ENCODE measurements at regions of chr3 and their contacts with region 1.

Region 1: DNA sequence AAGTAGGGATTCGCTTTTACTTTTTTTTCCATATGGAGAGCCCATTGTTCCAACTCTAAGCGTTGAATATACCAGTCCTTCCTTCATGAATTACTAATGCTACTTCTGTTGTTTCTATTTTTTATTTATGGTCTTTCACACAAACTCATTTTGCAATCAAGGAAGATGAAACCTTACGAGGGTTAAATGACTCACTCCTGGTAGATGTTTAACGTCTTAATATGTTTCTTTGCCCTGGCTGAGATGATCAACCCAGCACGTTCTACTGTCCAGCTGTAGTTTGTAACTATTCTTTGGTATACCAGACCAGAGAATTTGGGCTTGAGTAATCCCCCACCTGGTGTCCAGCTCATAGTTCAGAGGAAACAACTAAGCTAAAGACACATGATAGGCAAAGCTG is 23.1 kb downstream of the CDCP1 start:
- DNase-seq: peak; percentile 91
- H3K4me3 Mint-ChIP-seq: peak overlapping the region; percentile 19
- H3K27ac Mint-ChIP-seq: peak overlapping the region; percentile 80
- H3K4me1 Mint-ChIP-seq: peaks cover 64% of the 10 kb centered on the region
- H3K27me3 Mint-ChIP-seq: no peaks in the 10 kb centered on the region
- CTCF ChIP-seq: no peak

Region 2: GRCh38 chr3:44883999-44884431 is 239.0 kb before region 1 on chr3:
- CTCF ChIA-PET with region 1: no interaction called
- POLR2A ChIA-PET with region 1: no interaction called
- intact Hi-C with region 1: loop called (anchors 5 kb)
- DNase-seq: peak; percentile 96
- H3K4me3 Mint-ChIP-seq: peak overlapping the region; percentile 30
- H3K27ac Mint-ChIP-seq: peak overlapping the region; percentile 98
- H3K4me1 Mint-ChIP-seq: peaks cover 47% of the 10 kb centered on the region
- H3K27me3 Mint-ChIP-seq: no peaks in the 10 kb centered on the region
- CTCF ChIP-seq: no peak

Region 3: DNA sequence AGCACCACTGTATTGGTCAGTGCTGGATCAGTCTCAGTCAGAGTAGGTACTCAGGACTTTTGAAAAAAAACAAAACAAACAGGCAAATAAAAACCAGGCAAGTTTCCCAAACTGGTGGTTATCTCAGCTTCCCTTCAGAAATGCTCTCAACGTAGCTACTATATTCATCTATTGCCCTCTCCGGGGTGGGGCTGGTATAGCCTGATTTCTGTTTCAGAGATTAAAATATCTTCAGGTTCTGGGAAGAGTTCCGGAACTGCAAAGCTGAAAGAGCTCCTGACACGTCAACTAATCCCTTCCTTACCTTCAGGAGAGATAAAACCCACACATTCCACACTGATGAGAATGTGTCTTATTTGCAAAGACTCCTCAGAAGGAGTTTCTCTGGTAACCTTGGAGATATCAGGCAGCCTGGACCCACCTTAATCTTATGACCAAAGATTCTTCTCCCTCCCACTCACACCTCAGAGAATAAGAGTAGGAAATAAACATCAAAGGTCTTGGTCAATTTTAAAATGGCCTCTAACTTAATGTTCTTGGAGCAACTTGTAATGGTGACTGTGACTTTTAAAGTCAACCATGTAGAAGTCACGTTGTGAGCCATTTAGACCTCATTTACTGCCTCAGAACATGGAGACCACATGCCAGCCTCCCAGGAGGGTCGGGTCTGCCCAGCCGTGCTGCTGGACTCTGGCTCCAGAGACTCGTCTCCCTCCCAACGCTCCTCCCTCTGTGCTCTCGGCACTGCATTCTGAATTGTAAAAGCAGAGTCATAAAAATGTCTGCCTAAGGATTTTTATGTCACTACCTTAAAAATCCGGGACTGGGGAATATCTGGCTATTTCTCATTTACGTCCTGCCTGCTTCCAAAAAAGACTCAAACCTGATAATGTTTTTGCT is 30.6 kb before region 1 on chr3:
- CTCF ChIA-PET with region 1: interaction called, 3 read pairs
- POLR2A ChIA-PET with region 1: interaction called, 7 read pairs
- intact Hi-C with region 1: loop called (anchors 1 kb)
- DNase-seq: peak; percentile 71
- H3K4me3 Mint-ChIP-seq: no peak overlapping the region
- H3K27ac Mint-ChIP-seq: peak overlapping the region; percentile 87
- H3K4me1 Mint-ChIP-seq: peaks cover 18% of the 10 kb centered on the region
- H3K27me3 Mint-ChIP-seq: no peaks in the 10 kb centered on the region
- CTCF ChIP-seq: no peak

Region 4: GRCh38 chr3:45134758-45135521 is 11.9 kb after region 1 on chr3:
- CTCF ChIA-PET with region 1: interaction called, 12 read pairs
- POLR2A ChIA-PET with region 1: interaction called, 44 read pairs
- intact Hi-C with region 1: no loop called
- DNase-seq: no peak
- H3K4me3 Mint-ChIP-seq: no peak overlapping the region
- H3K27ac Mint-ChIP-seq: peak overlapping the region; percentile 96
- H3K4me1 Mint-ChIP-seq: peaks cover 67% of the 10 kb centered on the region
- H3K27me3 Mint-ChIP-seq: no peaks in the 10 kb centered on the region
- CTCF ChIP-seq: no peak

Region 5: DNA sequence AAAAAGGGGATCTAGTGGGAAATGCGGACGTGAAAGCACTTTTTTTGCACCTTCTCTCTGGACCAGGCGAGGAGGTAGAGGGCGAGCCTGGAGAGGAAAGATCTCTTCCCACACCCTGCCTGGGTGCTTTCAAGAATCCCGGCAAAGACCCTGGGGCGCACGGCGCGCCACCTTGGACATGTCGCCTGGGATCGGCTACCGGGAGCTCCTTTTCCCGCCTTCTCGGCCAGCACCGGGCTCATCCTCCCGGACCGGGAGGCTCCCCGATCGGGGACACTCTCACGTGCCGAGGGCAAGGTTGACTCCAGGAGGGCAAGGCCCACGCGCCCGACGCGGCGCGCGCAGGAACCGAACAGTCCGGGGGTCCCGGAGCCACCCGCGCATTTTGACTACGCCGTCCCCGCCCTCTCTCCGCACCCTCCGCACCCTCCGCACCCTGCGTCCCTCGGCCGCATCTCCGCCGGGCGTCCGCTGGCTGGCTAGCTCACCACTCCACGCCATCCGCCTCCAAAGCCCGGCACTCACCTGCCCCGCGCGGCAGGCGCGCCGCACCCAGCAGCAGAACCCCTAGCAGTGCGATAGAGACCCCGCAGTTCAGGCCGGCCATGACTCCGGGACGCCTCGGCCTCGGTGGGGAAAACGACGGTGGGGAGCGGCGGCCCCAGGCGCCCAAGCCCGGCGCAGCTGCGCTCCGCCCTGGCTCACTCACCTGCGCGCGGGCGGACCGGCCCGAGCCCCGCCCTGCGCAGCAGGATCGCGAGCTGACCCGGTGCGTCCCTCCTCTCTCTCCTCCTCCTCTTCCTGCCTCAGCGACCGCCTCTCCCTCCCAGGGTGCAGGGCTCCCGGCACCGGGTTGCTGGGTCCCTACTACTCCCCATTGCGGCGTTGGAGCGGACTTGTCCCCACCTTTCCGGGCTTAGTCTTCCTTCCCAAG is 22.9 kb after region 1 on chr3 and contains the start of gene CDCP1:
- CTCF ChIA-PET with region 1: interaction called, 16 read pairs
- POLR2A ChIA-PET with region 1: interaction called, 192 read pairs
- intact Hi-C with region 1: loop called (anchors 1 kb)
- DNase-seq: peak; percentile 70
- H3K4me3 Mint-ChIP-seq: peak within 1 kb of the TSS; percentile 88
- H3K27ac Mint-ChIP-seq: peak within 1 kb of the TSS; percentile 91
- H3K4me1 Mint-ChIP-seq: peaks cover 22% of the 10 kb centered on the region
- H3K27me3 Mint-ChIP-seq: no peaks in the 10 kb centered on the region
- CTCF ChIP-seq: no peak
- total RNA-seq, gene CDCP1: 180 and 208 TPM in 2 replicates

Region 6: GRCh38 chr3:45167011-45167911 is 44.2 kb after region 1 on chr3:
- CTCF ChIA-PET with region 1: interaction called, 3 read pairs
- POLR2A ChIA-PET with region 1: interaction called, 12 read pairs
- intact Hi-C with region 1: loop called (anchors 1 kb)
- DNase-seq: peak; percentile 97
- H3K4me3 Mint-ChIP-seq: peak overlapping the region; percentile 24
- H3K27ac Mint-ChIP-seq: peak overlapping the region; percentile 94
- H3K4me1 Mint-ChIP-seq: peaks cover 30% of the 10 kb centered on the region
- H3K27me3 Mint-ChIP-seq: no peaks in the 10 kb centered on the region
- CTCF ChIP-seq: no peak

Region 7: GRCh38 chr3:45701172-45701867 is 578.3 kb after region 1 on chr3:
- CTCF ChIA-PET with region 1: no interaction called
- POLR2A ChIA-PET with region 1: no interaction called
- intact Hi-C with region 1: no loop called
- DNase-seq: no peak
- H3K4me3 Mint-ChIP-seq: no peak overlapping the region
- H3K27ac Mint-ChIP-seq: no peak overlapping the region
- H3K4me1 Mint-ChIP-seq: peaks cover 10% of the 10 kb centered on the region
- H3K27me3 Mint-ChIP-seq: no peaks in the 10 kb centered on the region
- CTCF ChIP-seq: no peak

Measured in MCF 10A (cell line).